ENCODE measurements at regions of chr11 and their contacts with region 1.

Region 1: GRCh38 chr11:88301488-88302140 is 35.9 kb downstream of the CTSC start:
- DNase-seq: peak; percentile 85
- ATAC-seq: peak; percentile 80
- H3K4me3 ChIP-seq: peak overlapping the region; percentile 43
- H3K27ac ChIP-seq: peak overlapping the region; percentile 83
- H3K4me1 ChIP-seq: peaks cover 48% of the 10 kb centered on the region
- H3K27me3 ChIP-seq: no peaks in the 10 kb centered on the region
- CTCF ChIP-seq: no peak
- EP300 ChIP-seq: peak; percentile 86 to 95; a peak in 3 of 4 replicates
- POLR2A ChIP-seq: no peak
- RAD21 ChIP-seq: no peak

Region 2: GRCh38 chr11:88087337-88087736 is 214.3 kb before region 1 on chr11:
- CTCF ChIA-PET with region 1: no interaction called
- POLR2A ChIA-PET with region 1: no interaction called
- RAD21 ChIA-PET with region 1: no interaction called
- SMC1A ChIA-PET with region 1: no interaction called
- in situ Hi-C with region 1: no loop called
- intact Hi-C with region 1: no loop called
- DNase-seq: no peak
- ATAC-seq: no peak
- H3K4me3 ChIP-seq: no peak overlapping the region
- H3K27ac ChIP-seq: no peak overlapping the region
- H3K4me1 ChIP-seq: no peaks in the 10 kb centered on the region
- H3K27me3 ChIP-seq: no peaks in the 10 kb centered on the region
- CTCF ChIP-seq: no peak
- EP300 ChIP-seq: no peak
- POLR2A ChIP-seq: no peak
- RAD21 ChIP-seq: no peak

Region 3: DNA sequence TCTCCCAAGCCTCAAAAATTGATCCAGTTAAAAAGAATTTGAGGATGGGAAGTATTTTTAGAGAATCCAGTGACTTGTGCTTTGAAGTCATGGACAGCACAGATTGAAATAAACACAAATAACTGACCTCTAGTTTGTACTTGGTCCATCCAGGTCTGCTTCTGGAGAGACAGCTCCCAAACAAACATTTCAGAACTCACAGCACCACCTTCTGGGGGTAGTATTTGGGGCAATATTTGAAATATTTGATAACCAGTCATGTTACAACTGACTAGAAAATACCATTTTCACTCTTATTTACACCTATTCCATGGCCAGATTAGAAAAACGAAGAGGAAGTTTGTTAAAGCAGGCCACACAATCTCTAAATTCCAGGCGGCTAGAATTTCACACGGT is 20.3 kb before region 1 on chr11:
- CTCF ChIA-PET with region 1: interaction called, 7 read pairs
- POLR2A ChIA-PET with region 1: interaction called, 7 read pairs
- RAD21 ChIA-PET with region 1: no interaction called
- SMC1A ChIA-PET with region 1: interaction called, 22 read pairs
- in situ Hi-C with region 1: no loop called
- intact Hi-C with region 1: no loop called
- DNase-seq: no peak
- ATAC-seq: peak; percentile 48; the same call in 2 of the 3 replicates
- H3K4me3 ChIP-seq: no peak overlapping the region
- H3K27ac ChIP-seq: no peak overlapping the region
- H3K4me1 ChIP-seq: no peaks in the 10 kb centered on the region
- H3K27me3 ChIP-seq: no peaks in the 10 kb centered on the region
- CTCF ChIP-seq: peak in 2 of 3 experiments; percentile 31 to 39; a peak in 2 of 6 replicates
- EP300 ChIP-seq: no peak
- POLR2A ChIP-seq: no peak
- RAD21 ChIP-seq: peak; percentile 43

Region 4: GRCh38 chr11:88327061-88327460 is 25.4 kb after region 1 on chr11:
- CTCF ChIA-PET with region 1: interaction called, 4 read pairs
- POLR2A ChIA-PET with region 1: interaction called, 16 read pairs
- RAD21 ChIA-PET with region 1: interaction called, 80 read pairs
- SMC1A ChIA-PET with region 1: interaction called, 288 read pairs
- in situ Hi-C with region 1: no loop called
- intact Hi-C with region 1: no loop called
- DNase-seq: no peak
- ATAC-seq: peak; percentile 44
- H3K4me3 ChIP-seq: peak overlapping the region; percentile 23; the same call in 1 of the 2 replicates
- H3K27ac ChIP-seq: peak overlapping the region; percentile 67; the same call in 1 of the 2 replicates
- H3K4me1 ChIP-seq: peaks cover 42% of the 10 kb centered on the region
- H3K27me3 ChIP-seq: no peaks in the 10 kb centered on the region
- CTCF ChIP-seq: no peak
- EP300 ChIP-seq: peak; percentile 46 to 80; a peak in 1 of 4 replicates
- POLR2A ChIP-seq: no peak
- RAD21 ChIP-seq: no peak

Region 5: DNA sequence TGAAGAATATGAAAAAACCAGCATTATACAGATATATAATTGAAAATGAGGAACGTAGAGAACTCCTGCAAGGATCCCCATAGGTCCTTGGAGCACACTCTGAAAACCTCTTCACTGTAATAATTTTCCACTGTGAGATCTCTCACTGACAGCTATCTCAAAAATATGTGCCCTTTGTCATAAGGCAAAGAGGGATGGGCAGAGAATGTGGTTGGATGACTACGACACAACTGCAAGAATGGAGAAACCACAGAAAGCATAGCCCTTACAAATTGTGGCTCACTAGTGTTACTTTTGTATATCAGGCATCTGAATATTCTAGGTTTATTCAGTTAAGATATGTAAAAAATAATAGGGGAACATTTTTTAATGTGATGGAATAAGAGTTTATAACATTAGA is 43.8 kb after region 1 on chr11:
- CTCF ChIA-PET with region 1: interaction called, 5 read pairs
- POLR2A ChIA-PET with region 1: interaction called, 5 read pairs
- RAD21 ChIA-PET with region 1: interaction called, 7 read pairs
- SMC1A ChIA-PET with region 1: interaction called, 135 read pairs
- in situ Hi-C with region 1: no loop called
- intact Hi-C with region 1: no loop called
- DNase-seq: no peak
- ATAC-seq: peak; percentile 75
- H3K4me3 ChIP-seq: no peak overlapping the region
- H3K27ac ChIP-seq: no peak overlapping the region
- H3K4me1 ChIP-seq: peaks cover 18% of the 10 kb centered on the region
- H3K27me3 ChIP-seq: no peaks in the 10 kb centered on the region
- CTCF ChIP-seq: no peak
- EP300 ChIP-seq: no peak
- POLR2A ChIP-seq: no peak
- RAD21 ChIP-seq: no peak

Region 6: DNA sequence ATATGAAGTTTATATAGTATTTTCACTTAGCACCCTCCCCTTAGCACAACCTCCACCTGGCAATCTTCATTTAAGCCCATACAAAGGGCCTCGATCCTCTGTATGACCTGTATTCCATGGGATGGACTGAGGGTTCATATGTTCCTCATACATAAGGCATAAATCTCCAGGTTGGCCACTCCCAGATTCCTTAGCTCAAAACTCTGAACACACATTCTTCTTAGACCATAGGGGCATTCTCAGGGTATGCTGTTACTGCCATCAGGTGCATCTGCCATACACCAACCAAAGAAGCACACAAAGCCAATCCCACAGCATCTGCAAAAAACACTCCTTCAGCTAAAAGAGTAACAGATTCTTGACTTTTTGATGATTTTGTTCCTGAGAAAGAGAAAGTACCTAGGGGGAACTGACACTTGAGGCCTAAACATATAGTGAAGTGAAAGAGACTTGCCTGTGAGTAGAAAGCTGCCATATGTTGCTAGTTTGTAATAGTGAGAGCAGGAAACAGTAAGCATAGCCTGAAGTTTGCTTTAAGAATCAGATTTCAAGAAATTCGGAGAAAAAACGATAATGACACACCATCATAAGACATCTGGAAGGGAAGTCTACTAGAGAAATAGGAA is 133.7 kb after region 1 on chr11:
- CTCF ChIA-PET with region 1: no interaction called
- POLR2A ChIA-PET with region 1: no interaction called
- RAD21 ChIA-PET with region 1: interaction called, 5 read pairs
- SMC1A ChIA-PET with region 1: no interaction called
- in situ Hi-C with region 1: no loop called
- intact Hi-C with region 1: loop called (anchors 2 kb)
- DNase-seq: peak; percentile 77
- ATAC-seq: peak; percentile 97
- H3K4me3 ChIP-seq: no peak overlapping the region
- H3K27ac ChIP-seq: peak overlapping the region; percentile 90
- H3K4me1 ChIP-seq: peaks cover 26% of the 10 kb centered on the region
- H3K27me3 ChIP-seq: no peaks in the 10 kb centered on the region
- CTCF ChIP-seq: no peak
- EP300 ChIP-seq: peak; percentile 52; a peak in 2 of 4 replicates
- POLR2A ChIP-seq: no peak
- RAD21 ChIP-seq: peak; percentile 30

Region 7: DNA sequence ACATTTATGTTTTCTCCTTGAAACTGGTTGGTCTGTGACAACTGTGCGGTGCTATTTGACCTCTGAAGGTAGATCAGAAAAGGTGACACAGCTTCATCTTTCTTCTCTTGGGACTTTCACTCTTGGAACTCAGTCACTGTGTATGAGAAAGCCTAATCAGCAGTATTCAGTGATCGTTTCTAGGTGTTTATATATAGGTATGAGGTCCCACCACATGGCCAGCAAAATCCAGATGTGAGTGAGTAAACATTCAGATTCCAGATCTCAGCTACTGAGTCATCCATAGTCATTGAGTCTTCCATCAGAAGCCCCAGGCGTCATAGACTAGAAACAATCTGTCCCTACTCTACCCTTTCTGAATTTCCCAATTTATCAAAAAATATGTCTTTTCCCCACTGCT is 153.3 kb after region 1 on chr11:
- CTCF ChIA-PET with region 1: no interaction called
- POLR2A ChIA-PET with region 1: no interaction called
- RAD21 ChIA-PET with region 1: no interaction called
- SMC1A ChIA-PET with region 1: no interaction called
- in situ Hi-C with region 1: no loop called
- intact Hi-C with region 1: no loop called
- DNase-seq: no peak
- ATAC-seq: no peak
- H3K4me3 ChIP-seq: no peak overlapping the region
- H3K27ac ChIP-seq: no peak overlapping the region
- H3K4me1 ChIP-seq: no peaks in the 10 kb centered on the region
- H3K27me3 ChIP-seq: no peaks in the 10 kb centered on the region
- CTCF ChIP-seq: no peak
- EP300 ChIP-seq: no peak
- POLR2A ChIP-seq: no peak
- RAD21 ChIP-seq: no peak